ENCODE measurements at regions of chr6 and their contacts with region 1.

Region 1: GRCh38 chr6:161694995-161695394 is 421.1 kb upstream of the AGPAT4 start:
- DNase-seq: no peak
- ATAC-seq: peak in 2 of 8 donors; percentile 24 to 41
- H3K4me3 ChIP-seq: no peak overlapping the region
- H3K27ac ChIP-seq: no peak overlapping the region
- H3K4me1 ChIP-seq: no peaks in the 10 kb centered on the region
- H3K27me3 ChIP-seq: no peaks in the 10 kb centered on the region
- CTCF ChIP-seq: peak in 8 of 9 donors; percentile 12 to 61 (median 54)

Region 2: DNA sequence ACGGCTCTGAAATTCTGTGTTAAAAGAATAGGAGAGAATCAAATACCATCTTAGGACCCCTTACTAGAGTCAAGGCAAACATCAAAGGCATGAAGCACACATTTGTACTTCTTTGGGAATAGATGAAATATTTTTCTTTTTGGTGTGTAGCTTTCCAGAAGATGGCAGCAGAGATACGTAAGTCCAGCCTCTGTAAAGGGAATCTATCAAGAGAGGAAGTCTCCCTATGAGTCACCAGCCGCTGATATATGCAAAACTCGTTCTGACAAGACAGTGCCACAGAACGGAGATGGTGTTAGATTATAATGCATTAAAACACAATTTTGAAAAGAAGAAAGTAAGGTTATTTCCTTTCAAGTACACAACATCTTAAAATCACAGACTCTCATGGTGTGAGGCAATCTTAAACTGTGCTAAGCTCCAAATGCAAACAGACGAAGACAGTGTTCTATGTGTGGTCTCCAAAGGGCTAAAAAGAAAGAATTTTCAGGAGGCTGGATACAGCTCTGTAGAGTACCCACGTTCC is 301.1 kb before region 1 on chr6:
- intact Hi-C with region 1: loop called in 1 of 10 experiments (anchors 5 kb)
- DNase-seq: peak in 1 of 2 donors; percentile 69
- ATAC-seq: peak; percentile 73 to 88 (median 84)
- H3K4me3 ChIP-seq: peak overlapping the region in 3 of 10 donors; percentile 14 to 19 (median 16)
- H3K27ac ChIP-seq: peak overlapping the region in 1 of 10 donors; percentile 15
- H3K4me1 ChIP-seq: peaks cover 0 to 7% (median 3%) of the 10 kb centered on the region in 9 donors
- H3K27me3 ChIP-seq: no peaks in the 10 kb centered on the region
- CTCF ChIP-seq: peak; percentile 28 to 79 (median 69)